ENCODE measurements at regions of chr11 and their contacts with region 1.

Region 1: GRCh38 chr11:117143871-117144476 is at the start of gene PAFAH1B2:
- DNase-seq: peak; percentile 97
- ATAC-seq: peak; percentile 98
- total RNA-seq, gene PAFAH1B2: 52.3 TPM

Region 2: DNA sequence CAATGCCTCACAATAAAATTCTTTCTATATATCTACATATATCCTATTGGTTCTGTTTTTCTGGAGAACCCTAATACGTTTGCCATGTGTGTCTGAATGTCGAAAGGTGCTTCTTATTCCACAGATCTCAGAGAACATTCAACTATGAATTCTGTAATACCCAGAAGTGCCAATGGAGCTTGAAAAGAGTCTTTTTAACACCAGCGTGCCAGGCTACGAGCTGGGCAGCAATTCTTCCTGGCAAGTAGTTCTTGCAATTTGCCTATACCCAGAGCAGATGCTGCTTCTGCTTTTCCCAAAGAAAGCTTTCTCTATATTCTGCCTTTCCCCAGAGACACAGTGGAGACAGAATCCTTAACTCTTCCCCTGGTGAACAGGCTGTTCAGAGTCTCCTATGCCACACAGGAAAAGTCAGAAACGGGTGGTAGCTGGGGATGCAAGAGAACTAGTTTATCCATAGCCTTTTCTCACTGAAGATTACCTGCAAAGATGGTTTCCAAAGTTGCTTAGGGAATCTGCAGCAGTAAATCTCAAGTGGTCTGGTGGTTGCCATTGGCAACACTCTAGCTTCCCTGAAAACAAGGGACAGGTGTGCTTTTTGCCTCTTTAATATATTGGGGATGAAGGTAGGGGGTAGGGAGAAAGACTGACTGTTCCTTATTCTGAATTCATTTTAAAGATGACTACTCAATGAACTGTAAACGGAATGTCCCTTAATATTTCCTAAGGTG is 16.6 kb before region 1 on chr11:
- intact Hi-C with region 1: no loop called
- DNase-seq: no peak
- ATAC-seq: no peak

Region 3: DNA sequence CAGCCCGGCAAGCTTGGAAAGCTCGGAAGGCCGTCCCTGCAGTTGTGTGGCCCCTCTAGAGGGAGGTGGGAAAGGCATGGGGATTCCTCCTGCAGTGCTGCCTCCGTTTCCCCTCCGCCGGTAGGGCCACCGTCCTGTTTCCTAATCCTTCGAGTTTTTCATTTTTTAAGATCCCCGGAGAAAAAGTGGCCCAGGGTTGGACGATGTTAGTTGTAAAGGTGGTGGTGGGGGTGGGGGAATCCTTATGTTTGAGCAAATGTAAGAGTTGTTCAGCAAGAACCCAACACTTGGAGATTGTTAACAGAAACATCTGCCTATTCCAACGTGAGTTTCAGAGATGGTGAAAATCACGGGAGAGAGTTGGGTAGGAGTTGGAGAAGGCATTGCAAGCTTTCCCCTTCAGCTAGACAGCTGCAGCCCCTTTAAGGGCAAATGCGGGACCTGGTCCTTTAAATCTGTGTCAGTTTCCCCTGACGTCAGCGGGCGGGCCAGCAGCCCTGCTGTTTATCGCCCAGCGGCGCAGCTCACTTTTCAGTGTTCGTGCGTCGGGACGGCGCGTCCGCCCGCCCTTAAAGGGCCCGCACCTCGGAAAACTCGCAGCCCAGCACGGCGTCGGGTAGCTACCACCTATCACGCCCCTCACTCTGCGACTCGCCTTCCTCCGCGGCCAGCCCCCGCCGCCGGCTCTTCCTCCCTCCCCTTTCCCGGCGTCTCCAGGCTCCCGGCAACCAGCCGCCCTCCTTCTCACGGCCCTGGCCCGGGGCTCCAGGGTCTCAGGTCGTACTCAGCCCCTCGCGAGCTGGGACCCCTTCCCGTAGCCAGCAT is 34.4 kb after region 1 on chr11 and contains the start of gene SIDT2:
- intact Hi-C with region 1: loop called (anchors 5 kb)
- DNase-seq: peak; percentile 97
- ATAC-seq: peak; percentile 95
- total RNA-seq, gene SIDT2: 26.1 TPM

Region 4: GRCh38 chr11:117232092-117232878 is 88.3 kb after region 1 on chr11 and contains the start of gene RNF214:
- intact Hi-C with region 1: no loop called
- DNase-seq: peak; percentile 86
- ATAC-seq: peak; percentile 90
- total RNA-seq, gene RNF214: 17.3 TPM

Region 5: GRCh38 chr11:117316197-117316961 is 172.4 kb after region 1 on chr11 and contains the start of gene BACE1:
- intact Hi-C with region 1: no loop called
- DNase-seq: peak; percentile 85
- ATAC-seq: peak; percentile 97
- total RNA-seq, gene BACE1: 10.7 TPM

Measured in Right ventricle myocardium inferior (tissue), 1 donor.